ENCODE measurements at regions of chr7 and their contacts with region 1.

Region 1: DNA sequence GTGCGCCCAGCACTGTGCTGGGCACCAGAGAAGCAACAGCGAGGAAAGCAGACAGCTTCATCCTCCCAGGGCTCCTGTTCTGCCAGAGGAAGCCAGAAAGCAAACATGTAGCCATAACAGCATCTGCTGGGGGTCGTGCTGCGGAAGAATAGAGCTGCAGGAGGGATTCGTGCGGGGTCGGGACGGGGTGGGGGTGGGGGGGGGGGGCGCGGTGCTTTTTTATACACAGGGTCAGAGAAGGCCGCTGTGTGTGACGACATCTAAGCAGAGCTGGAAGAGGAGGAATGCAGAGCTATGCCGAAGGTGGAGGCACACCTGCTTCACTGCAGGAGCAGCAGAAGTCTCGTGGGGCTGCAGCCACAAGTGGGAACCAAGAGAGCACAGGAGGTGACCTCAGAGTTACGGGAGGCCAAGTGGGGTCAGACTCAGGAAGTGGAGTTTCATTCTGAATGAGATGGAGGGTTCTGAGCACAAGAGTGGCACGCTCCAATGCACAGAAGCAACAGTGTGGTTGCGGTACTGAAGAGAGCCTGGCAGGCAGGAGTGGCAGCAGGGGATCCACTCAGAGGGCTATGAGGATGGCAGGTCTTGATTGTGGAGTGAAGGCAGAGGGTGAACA is 11.1 kb downstream of the PKD1L1 start:
- DNase-seq: peak; percentile 62
- ATAC-seq: peak; percentile 91
- H3K4me3 Mint-ChIP-seq: peak overlapping the region; percentile 63
- H3K27ac Mint-ChIP-seq: peak overlapping the region; percentile 46
- H3K4me1 Mint-ChIP-seq: peaks cover 35% of the 10 kb centered on the region
- H3K27me3 Mint-ChIP-seq: no peaks in the 10 kb centered on the region
- CTCF ChIP-seq: no peak

Region 2: GRCh38 chr7:47444379-47445057 is 492.7 kb before region 1 on chr7:
- CTCF ChIA-PET with region 1: interaction called, 3 read pairs
- POLR2A ChIA-PET with region 1: no interaction called
- intact Hi-C with region 1: loop called (anchors 1 kb)
- DNase-seq: no peak
- ATAC-seq: peak; percentile 72
- H3K4me3 Mint-ChIP-seq: no peak overlapping the region
- H3K27ac Mint-ChIP-seq: no peak overlapping the region
- H3K4me1 Mint-ChIP-seq: peaks cover 22% of the 10 kb centered on the region
- H3K27me3 Mint-ChIP-seq: no peaks in the 10 kb centered on the region
- CTCF ChIP-seq: no peak

Region 3: DNA sequence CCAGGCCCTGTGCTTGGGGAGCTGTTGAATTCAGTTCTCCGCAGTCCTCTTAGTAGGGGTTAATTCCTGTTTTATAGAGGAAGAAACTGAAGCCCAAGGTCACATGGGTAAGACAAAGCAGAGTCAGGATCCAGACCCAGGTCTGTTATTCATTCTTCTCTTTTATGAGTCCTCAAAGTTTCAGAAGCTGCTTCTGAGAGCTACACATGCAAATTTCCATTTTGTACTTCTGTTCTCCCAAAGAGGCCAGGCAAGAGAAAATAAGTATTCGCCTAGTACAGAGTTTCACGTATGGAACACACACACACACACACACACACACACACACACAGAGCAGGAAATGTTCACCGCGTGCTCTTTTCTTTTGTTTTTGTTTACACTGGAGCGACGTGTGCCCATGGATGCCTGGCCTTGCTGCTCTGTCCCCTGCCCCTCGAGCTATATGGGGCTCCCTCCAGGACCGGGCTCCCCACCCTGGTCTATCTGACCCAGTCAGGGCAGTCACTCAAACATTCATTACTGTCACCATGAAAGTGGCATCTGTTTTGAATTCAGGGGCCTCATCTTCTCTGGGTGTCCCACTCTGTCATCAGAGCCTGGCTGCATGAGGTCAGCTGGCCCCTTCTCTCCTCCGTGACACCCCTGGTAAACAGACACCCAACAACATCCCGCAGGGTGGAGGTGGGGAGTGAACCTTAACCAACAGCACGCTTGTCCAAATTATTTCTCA is 439.6 kb before region 1 on chr7:
- CTCF ChIA-PET with region 1: no interaction called
- POLR2A ChIA-PET with region 1: interaction called, 3 read pairs
- intact Hi-C with region 1: loop called (anchors 5 kb)
- DNase-seq: no peak
- ATAC-seq: peak; percentile 81
- H3K4me3 Mint-ChIP-seq: peak overlapping the region; percentile 64
- H3K27ac Mint-ChIP-seq: peak overlapping the region; percentile 87
- H3K4me1 Mint-ChIP-seq: peaks cover 70% of the 10 kb centered on the region
- H3K27me3 Mint-ChIP-seq: no peaks in the 10 kb centered on the region
- CTCF ChIP-seq: no peak

Region 4: GRCh38 chr7:47604496-47604890 is 332.7 kb before region 1 on chr7:
- CTCF ChIA-PET with region 1: no interaction called
- POLR2A ChIA-PET with region 1: no interaction called
- intact Hi-C with region 1: no loop called
- DNase-seq: no peak
- ATAC-seq: no peak
- H3K4me3 Mint-ChIP-seq: no peak overlapping the region
- H3K27ac Mint-ChIP-seq: no peak overlapping the region
- H3K4me1 Mint-ChIP-seq: peaks cover 47% of the 10 kb centered on the region
- H3K27me3 Mint-ChIP-seq: no peaks in the 10 kb centered on the region
- CTCF ChIP-seq: no peak

Region 5: GRCh38 chr7:47833211-47833610 is 104.0 kb before region 1 on chr7:
- CTCF ChIA-PET with region 1: no interaction called
- POLR2A ChIA-PET with region 1: no interaction called
- intact Hi-C with region 1: loop called (anchors 2 kb)
- DNase-seq: no peak
- ATAC-seq: peak; percentile 90
- H3K4me3 Mint-ChIP-seq: no peak overlapping the region
- H3K27ac Mint-ChIP-seq: no peak overlapping the region
- H3K4me1 Mint-ChIP-seq: peaks cover 10% of the 10 kb centered on the region
- H3K27me3 Mint-ChIP-seq: no peaks in the 10 kb centered on the region
- CTCF ChIP-seq: no peak

Region 6: GRCh38 chr7:47926704-47927103 is 10.5 kb before region 1 on chr7:
- CTCF ChIA-PET with region 1: interaction called, 21 read pairs
- POLR2A ChIA-PET with region 1: interaction called, 50 read pairs
- intact Hi-C with region 1: loop called (anchors 1 kb)
- DNase-seq: no peak
- ATAC-seq: no peak
- H3K4me3 Mint-ChIP-seq: no peak overlapping the region
- H3K27ac Mint-ChIP-seq: no peak overlapping the region
- H3K4me1 Mint-ChIP-seq: peaks cover 21% of the 10 kb centered on the region
- H3K27me3 Mint-ChIP-seq: peaks cover 8% of the 10 kb centered on the region
- CTCF ChIP-seq: no peak

Region 7: GRCh38 chr7:48035301-48035966 is 98.3 kb after region 1 on chr7 and contains the start of gene C7orf57:
- CTCF ChIA-PET with region 1: no interaction called
- POLR2A ChIA-PET with region 1: no interaction called
- intact Hi-C with region 1: loop called (anchors 5 kb)
- DNase-seq: peak; percentile 75
- ATAC-seq: peak; percentile 97
- H3K4me3 Mint-ChIP-seq: peak within 1 kb of the TSS; percentile 73
- H3K27ac Mint-ChIP-seq: no peak within 1 kb of the TSS
- H3K4me1 Mint-ChIP-seq: peaks cover 13% of the 10 kb centered on the region
- H3K27me3 Mint-ChIP-seq: peaks cover 25% of the 10 kb centered on the region
- CTCF ChIP-seq: no peak
- total RNA-seq, gene C7orf57: not detected in 2 replicates

Region 8: GRCh38 chr7:48109848-48110663 is 172.9 kb after region 1 on chr7:
- CTCF ChIA-PET with region 1: interaction called, 15 read pairs
- POLR2A ChIA-PET with region 1: no interaction called
- intact Hi-C with region 1: no loop called
- DNase-seq: peak; percentile 79
- ATAC-seq: peak; percentile 92
- H3K4me3 Mint-ChIP-seq: no peak overlapping the region
- H3K27ac Mint-ChIP-seq: no peak overlapping the region
- H3K4me1 Mint-ChIP-seq: peaks cover 5% of the 10 kb centered on the region
- H3K27me3 Mint-ChIP-seq: peaks cover 6% of the 10 kb centered on the region
- CTCF ChIP-seq: peak; percentile 75

Region 9: DNA sequence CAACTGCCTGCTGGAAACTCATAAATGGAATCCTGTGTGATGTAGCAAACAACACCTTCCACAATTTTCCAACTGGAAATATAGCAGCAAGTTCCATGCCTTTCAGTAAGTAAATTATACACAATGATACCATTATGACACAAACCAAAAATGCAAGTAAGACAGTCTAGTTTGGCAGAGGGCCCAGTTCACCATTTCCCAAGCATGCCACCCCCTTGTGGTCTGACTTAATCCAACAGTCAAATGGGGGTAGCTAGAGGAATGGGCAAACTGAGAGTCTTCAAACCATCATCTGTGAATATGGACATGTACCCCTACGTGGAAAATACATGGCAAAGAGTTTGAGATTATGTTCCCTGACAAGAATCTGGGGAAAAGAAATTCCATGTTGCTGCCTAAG is 1698.6 kb after region 1 on chr7:
- CTCF ChIA-PET with region 1: no interaction called
- POLR2A ChIA-PET with region 1: no interaction called
- intact Hi-C with region 1: no loop called
- DNase-seq: no peak
- ATAC-seq: no peak
- H3K4me3 Mint-ChIP-seq: no peak overlapping the region
- H3K27ac Mint-ChIP-seq: no peak overlapping the region
- H3K4me1 Mint-ChIP-seq: no peaks in the 10 kb centered on the region
- H3K27me3 Mint-ChIP-seq: no peaks in the 10 kb centered on the region
- CTCF ChIP-seq: no peak

Measured in activated B cell treated with CpG ODN at 0.5 μM for 24 hours (primary cell).